ENCODE measurements at regions of chr2 and their contacts with region 1.

Region 1: DNA sequence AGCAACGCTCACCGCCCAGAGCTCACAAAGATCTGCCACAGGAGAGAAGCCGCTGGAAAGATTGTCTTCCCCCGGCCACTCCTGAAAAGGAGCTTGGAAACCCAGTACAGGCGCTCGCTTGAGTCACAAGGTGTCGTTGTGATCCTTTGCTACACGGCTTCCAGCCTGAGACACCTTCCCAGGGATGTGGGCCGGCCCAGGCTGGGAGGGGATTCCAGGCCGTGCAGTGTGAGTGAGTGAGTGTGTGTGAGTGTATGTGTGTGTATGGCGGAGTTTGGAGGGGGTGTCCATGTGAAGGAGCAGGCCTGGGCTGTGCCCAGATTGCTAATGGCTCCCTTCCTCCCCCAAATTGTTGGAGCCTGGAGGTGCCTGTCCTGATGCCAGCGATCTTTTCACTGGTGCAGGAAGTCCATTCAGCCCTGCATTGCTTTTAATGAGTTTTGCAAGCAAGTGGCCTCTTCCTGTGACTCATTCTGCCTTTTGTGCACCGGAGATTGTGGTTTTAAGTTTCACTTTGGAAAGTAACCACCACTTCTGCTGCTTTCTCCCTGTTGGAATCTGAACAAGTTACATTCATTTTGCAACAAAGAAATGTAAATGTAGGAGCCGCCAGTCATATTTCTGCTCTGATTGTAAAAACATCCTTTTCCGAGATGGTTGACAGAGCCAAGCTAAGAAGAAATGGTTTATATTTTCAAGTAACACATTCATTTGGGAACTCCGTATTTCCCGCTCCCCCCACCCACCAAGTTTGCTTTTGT is 83.7 kb downstream of the LPIN1 start:
- DNase-seq: peak; percentile 96
- ATAC-seq: peak; percentile 88
- H3K4me3 ChIP-seq: peak overlapping the region; percentile 55 to 77 (median 70)
- H3K27ac ChIP-seq: peak overlapping the region; percentile 80
- H3K4me1 ChIP-seq: peaks cover 60% of the 10 kb centered on the region
- H3K27me3 ChIP-seq: no peaks in the 10 kb centered on the region; a peak in 1 of 5 replicates
- CTCF ChIP-seq: peak; percentile 86
- EP300 ChIP-seq: peak in 1 of 2 experiments; percentile 84; a peak in 2 of 4 replicates
- POLR2A ChIP-seq: peak; percentile 64 to 65
- RAD21 ChIP-seq: no peak

Region 2: GRCh38 chr2:11819235-11819729 is 10.8 kb before region 1 on chr2:
- CTCF ChIA-PET with region 1: no interaction called
- POLR2A ChIA-PET with region 1: interaction called, 31 read pairs
- in situ Hi-C with region 1: no loop called
- intact Hi-C with region 1: no loop called
- DNase-seq: peak; percentile 96
- ATAC-seq: peak; percentile 79
- H3K4me3 ChIP-seq: peak overlapping the region in 1 of 3 experiments; percentile 4; a peak in 2 of 6 replicates
- H3K27ac ChIP-seq: peak overlapping the region; percentile 82
- H3K4me1 ChIP-seq: peaks cover 64% of the 10 kb centered on the region
- H3K27me3 ChIP-seq: no peaks in the 10 kb centered on the region
- CTCF ChIP-seq: no peak
- EP300 ChIP-seq: peak in 1 of 2 experiments; percentile 96; a peak in 2 of 4 replicates
- POLR2A ChIP-seq: no peak
- RAD21 ChIP-seq: no peak

Region 3: GRCh38 chr2:11950894-11951293 is 120.8 kb after region 1 on chr2:
- CTCF ChIA-PET with region 1: no interaction called
- POLR2A ChIA-PET with region 1: no interaction called
- in situ Hi-C with region 1: no loop called
- intact Hi-C with region 1: loop called (anchors 1 kb)
- DNase-seq: no peak
- ATAC-seq: no peak
- H3K4me3 ChIP-seq: no peak overlapping the region
- H3K27ac ChIP-seq: no peak overlapping the region
- H3K4me1 ChIP-seq: no peaks in the 10 kb centered on the region
- H3K27me3 ChIP-seq: no peaks in the 10 kb centered on the region
- CTCF ChIP-seq: no peak
- EP300 ChIP-seq: no peak
- POLR2A ChIP-seq: no peak
- RAD21 ChIP-seq: no peak

Region 4: GRCh38 chr2:12326449-12327190 is 496.5 kb after region 1 on chr2:
- CTCF ChIA-PET with region 1: no interaction called
- POLR2A ChIA-PET with region 1: no interaction called
- in situ Hi-C with region 1: no loop called
- intact Hi-C with region 1: loop called (anchors 1 kb)
- DNase-seq: peak; percentile 34
- ATAC-seq: peak; percentile 99
- H3K4me3 ChIP-seq: no peak overlapping the region
- H3K27ac ChIP-seq: no peak overlapping the region
- H3K4me1 ChIP-seq: no peaks in the 10 kb centered on the region
- H3K27me3 ChIP-seq: no peaks in the 10 kb centered on the region; a peak in 1 of 5 replicates
- CTCF ChIP-seq: peak; percentile 69
- EP300 ChIP-seq: no peak
- POLR2A ChIP-seq: no peak
- RAD21 ChIP-seq: 0 out of 2 replicates have a peak, but pooled peaks have one; percentile 19

Region 5: DNA sequence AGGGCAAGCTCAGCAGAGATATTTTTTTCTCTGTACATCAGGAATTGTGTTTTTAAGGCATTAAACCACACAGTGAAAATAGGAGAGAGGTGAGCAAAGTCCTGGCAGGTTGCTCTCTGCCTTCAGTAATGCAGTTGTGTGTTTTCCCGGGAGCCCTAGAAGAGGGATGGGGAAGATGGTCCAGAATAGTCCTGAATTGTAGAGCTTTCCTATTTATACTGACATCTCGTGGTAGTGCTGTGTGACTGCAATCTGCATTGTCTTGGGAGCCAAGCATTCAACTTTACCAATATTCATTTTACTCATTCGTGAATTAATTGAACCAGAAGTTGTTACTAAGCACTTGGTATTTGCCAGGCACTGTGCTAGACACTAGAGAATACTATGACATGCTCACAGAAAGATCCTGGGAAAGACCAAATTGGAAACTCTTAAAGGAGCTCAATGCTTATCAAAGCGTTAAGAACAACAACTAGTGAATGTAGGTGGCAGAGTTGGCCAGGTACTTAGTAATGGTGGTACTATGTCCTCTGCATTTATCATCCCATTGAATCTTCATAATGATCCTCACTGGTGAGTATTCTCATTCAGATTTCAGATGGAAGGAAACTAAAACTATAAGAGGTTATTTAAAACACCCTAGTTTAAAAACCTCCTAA is 1101.2 kb after region 1 on chr2:
- CTCF ChIA-PET with region 1: no interaction called
- POLR2A ChIA-PET with region 1: no interaction called
- in situ Hi-C with region 1: no loop called
- intact Hi-C with region 1: loop called (anchors 1 kb)
- DNase-seq: peak; percentile 3
- ATAC-seq: peak; percentile 92
- H3K4me3 ChIP-seq: no peak overlapping the region
- H3K27ac ChIP-seq: no peak overlapping the region
- H3K4me1 ChIP-seq: no peaks in the 10 kb centered on the region
- H3K27me3 ChIP-seq: no peaks in the 10 kb centered on the region
- CTCF ChIP-seq: peak; percentile 77
- EP300 ChIP-seq: no peak
- POLR2A ChIP-seq: no peak
- RAD21 ChIP-seq: 0 out of 2 replicates have a peak, but pooled peaks have one; percentile 31